Sciatic nerve (tissue), 2 donors: ENCODE measurements at regions of chr5 and their contacts with region 1.

Region 1: DNA sequence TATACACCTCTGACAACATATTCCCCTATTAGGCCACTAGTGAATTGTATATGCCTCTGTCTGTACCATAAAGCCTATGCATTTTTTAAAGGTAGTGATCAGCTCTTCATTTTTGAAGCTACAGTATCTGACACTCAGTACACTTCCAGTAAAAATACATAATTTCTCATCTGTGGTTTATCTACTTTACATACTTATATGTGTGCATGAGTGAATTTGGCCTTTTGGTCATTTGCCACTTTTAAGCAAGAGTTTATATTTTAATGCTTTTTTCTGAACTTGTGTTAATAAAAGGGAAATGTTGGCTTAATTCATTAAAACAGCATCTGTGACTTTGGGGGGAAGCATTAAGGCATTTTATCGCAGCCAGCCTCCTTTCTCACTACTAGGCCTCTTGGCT is 47.8 kb downstream of the ST8SIA4 start:
- DNase-seq: no peak
- ATAC-seq: no peak

Region 2: DNA sequence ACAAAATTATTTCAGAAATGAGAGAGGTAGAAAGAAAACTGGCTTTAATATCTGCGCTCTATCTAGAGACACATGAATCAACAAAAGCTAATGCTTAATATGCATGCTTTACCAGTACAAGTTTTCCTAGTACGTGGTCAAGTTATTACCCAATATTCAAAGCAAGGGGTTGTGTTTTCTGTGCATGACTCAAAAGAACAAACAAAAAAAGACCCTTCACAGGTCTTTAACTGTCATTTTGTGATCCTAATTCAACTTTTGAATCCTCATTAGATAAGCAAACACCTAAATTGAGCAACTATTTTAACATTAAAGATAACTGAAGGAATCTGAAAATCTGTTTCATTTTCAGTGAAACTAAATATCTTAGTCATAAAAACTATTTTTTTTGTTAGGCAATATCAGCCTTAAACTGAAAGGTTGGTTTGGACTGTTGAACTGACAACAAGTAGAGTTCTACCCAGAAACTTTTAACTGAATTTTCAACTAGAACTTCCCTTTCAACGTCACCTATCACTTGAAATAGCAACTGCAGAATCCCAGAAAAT is 35.2 kb after region 1 on chr5:
- intact Hi-C with region 1: no loop called
- DNase-seq: no peak
- ATAC-seq: peak; percentile 62

Region 3: DNA sequence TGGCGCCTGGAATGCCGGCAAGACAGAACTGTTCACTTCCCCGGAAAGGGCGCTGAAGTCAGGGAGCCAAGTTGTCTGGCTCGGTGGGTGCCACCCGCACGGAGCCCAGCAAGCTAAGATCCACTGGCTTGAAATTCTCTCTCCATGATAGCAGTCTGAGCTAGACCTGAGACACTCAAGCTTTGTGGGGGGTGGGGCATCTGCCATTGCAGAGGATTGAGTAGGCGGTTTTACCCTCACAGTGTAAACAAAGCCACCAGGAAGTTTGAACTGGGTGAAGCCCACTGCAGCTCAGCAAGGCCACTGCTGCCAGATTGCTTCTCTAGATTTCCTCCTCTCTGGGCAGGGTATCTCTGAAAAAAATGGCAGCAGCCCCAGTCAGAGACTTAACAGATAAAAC is 1163.4 kb after region 1 on chr5:
- intact Hi-C with region 1: loop called (anchors 5 kb)
- DNase-seq: no peak
- ATAC-seq: no peak